HEK293 (cell line): ENCODE measurements at regions of chr17 and their contacts with region 1.

Region 1: DNA sequence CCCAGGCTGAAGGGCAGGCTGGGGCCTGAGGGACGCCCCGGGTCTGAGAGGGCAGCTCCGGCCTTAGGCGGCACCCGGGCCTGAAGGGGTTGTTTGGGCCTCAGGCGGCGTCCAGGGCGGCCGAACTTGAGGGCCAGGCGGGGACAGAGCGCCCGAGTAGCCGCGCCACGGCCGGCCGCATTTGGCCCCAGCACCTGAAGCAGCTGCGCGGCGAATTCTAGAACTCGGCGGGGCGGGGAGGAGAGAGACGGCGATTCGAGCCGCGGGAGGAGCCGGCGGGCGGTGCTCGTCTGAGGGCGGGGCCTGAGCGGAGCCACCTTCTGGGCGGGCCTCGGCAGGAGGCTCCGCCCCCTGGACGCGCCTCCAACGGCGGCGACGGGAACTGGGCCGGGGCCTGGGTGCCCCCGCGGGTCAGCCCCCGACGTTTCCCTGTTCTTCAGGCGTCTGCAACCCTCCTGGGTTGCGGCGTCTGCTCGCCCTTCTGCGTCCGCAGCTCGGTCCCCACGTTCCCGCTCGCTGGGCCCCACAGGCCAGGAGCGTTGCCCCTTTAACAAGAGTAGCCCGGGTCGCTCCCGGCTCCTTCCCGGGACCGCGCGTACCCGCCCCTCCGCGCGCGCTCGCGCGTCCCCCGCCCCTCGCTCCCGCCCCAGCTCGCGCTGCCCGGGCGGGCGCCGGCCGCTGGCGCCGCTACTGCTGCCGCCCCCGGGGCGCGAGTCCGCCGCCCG is at the starts of genes INCA1 and KIF1C:
- H3K4me3 ChIP-seq: peak within 1 kb of the TSS; percentile 65
- H3K27ac ChIP-seq: peak within 1 kb of the TSS; percentile 77
- H3K4me1 ChIP-seq: peaks cover 14% of the 10 kb centered on the region
- CTCF ChIP-seq: peak; percentile 52

Region 2: GRCh38 chr17:4703330-4703691 is 294.2 kb before region 1 on chr17:
- CTCF ChIA-PET with region 1: no interaction called
- POLR2A ChIA-PET with region 1: interaction called, 12 read pairs
- H3K4me3 ChIP-seq: peak overlapping the region; percentile 78
- H3K27ac ChIP-seq: peak overlapping the region; percentile 58
- H3K4me1 ChIP-seq: peaks cover 12% of the 10 kb centered on the region
- CTCF ChIP-seq: no peak

Region 3: DNA sequence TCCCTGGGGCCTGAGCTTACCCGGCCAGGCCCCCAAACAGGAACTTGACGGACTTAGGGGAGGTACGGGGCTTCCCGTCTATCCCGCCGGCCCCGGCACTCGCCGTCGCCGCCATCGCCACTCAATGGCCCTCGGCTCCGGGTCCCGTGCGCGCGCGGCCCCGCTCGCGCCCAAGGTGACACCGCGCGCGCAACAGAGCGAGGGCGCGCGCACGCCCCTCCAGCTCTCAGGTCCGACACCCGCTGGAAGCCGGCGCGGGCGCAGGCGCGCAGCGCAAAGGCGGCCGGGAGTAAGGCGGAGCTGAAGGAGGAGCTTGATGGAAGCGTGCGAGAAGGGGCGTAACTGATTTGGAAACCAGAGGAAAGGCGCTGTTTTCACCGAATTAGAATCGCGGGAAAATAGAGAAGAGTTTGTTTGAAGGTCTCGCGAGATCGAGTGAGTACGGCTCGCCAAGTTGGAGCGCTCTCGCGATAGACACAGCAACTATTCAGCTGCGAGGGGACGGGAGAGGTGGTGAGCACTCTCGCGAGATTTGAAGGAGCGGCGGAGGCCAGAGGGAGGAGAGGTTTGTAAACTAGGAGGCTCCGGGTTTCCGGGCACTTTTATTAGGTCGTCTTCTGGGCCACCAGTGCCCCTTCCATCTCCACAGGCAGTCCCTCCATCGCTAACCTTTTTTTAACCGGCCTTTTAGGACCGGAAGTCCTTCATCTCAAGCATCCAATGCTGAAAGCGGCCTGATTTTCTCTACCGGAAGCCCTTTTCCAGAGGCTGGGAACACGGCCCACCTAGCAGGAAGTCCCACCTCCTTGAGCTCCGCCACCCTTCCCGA is 57.5 kb before region 1 on chr17 and contains the starts of genes RNF167 and SLC25A11:
- CTCF ChIA-PET with region 1: no interaction called
- POLR2A ChIA-PET with region 1: interaction called, 19 read pairs
- H3K4me3 ChIP-seq: peak within 1 kb of the TSS; percentile 87
- H3K27ac ChIP-seq: peak within 1 kb of the TSS; percentile 93
- H3K4me1 ChIP-seq: peaks cover 9% of the 10 kb centered on the region
- CTCF ChIP-seq: no peak

Region 4: GRCh38 chr17:4966844-4967538 is 30.5 kb before region 1 on chr17:
- CTCF ChIA-PET with region 1: no interaction called
- POLR2A ChIA-PET with region 1: interaction called, 27 read pairs
- H3K4me3 ChIP-seq: peak overlapping the region; percentile 70
- H3K27ac ChIP-seq: peak overlapping the region; percentile 97
- H3K4me1 ChIP-seq: peaks cover 15% of the 10 kb centered on the region
- CTCF ChIP-seq: no peak

Region 5: DNA sequence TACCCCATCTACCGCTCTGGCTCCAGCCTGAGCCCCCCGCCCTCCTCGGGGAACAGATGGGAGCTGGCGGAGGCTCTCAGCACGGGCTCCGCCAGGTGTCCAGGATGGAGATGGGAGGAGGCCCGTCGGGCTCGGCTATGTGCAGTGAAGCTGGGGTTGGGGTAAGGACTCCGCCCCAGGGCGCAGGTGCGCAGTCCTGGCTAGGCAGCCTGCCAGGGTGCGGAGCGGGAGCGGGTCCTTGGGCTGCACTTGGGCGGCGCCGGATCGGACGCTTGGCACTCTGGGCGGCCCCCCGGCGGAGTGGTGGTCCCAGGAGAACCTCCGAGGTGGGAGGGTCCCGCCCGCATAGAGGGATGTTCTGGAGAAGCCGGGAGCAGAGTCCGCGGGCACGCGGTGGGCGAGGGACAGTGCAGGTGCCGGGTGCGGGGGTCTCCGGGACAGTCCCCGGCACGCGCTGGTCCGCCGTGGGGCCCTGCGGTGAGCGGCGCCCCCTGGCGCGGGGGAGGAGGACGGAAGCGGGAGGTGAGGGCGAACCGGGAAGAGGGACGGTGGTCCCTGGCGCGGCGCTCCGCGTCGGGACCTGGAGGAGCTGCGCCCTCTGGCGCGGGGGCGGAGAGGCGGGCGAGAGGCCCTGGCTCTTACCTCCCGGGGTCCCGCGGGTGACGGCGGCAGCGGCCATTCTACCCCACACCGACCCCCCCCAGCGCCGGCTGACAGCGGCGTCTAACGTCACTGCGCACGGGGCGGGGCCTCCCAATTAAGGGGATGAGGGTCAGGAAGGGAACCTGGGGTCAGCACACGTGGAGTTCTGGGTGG is 10.3 kb before region 1 on chr17 and contains the start of gene CAMTA2:
- CTCF ChIA-PET with region 1: interaction called, 21 read pairs
- POLR2A ChIA-PET with region 1: interaction called, 21 read pairs
- H3K4me3 ChIP-seq: peak within 1 kb of the TSS; percentile 78
- H3K27ac ChIP-seq: peak within 1 kb of the TSS; percentile 92
- H3K4me1 ChIP-seq: peaks cover 11% of the 10 kb centered on the region
- CTCF ChIP-seq: peak; percentile 99

Region 6: DNA sequence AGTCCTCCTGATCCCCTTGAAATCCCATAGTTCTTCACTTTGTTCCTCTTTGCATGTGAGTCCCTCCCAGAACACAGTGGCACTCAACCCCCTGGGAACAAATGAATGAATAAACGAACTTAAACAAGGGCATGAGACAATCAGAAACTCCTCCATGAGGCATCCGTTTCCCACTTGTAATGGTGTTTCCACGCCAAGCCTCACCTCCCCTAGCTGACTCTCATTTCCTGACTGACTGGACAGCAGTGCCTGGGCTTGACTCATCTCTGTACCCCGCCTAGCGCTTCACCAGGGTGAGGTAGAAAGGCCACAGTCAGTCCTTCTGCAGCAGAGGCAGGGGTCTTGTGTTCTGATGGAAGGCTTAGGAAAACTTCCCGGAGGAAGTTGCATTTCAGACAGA is 14.5 kb after region 1 on chr17:
- CTCF ChIA-PET with region 1: interaction called, 4 read pairs
- POLR2A ChIA-PET with region 1: interaction called, 13 read pairs
- H3K4me3 ChIP-seq: no peak overlapping the region
- H3K27ac ChIP-seq: no peak overlapping the region
- H3K4me1 ChIP-seq: no peaks in the 10 kb centered on the region
- CTCF ChIP-seq: no peak